IMR-90 (cell line): ENCODE measurements at regions of chr1 and their contacts with region 1.

Region 1: GRCh38 chr1:25895365-25895993 is 10.7 kb downstream of the STMN1 start:
- DNase-seq: peak; percentile 92
- ATAC-seq: peak; percentile 87
- H3K4me3 ChIP-seq: no peak overlapping the region
- H3K27ac ChIP-seq: peak overlapping the region; percentile 11
- H3K4me1 ChIP-seq: peaks cover 33% of the 10 kb centered on the region
- H3K27me3 ChIP-seq: no peaks in the 10 kb centered on the region
- CTCF ChIP-seq: peak; percentile 100
- POLR2A ChIP-seq: peak; percentile 52; the same call in 1 of the 2 replicates
- RAD21 ChIP-seq: peak; percentile 99

Region 2: GRCh38 chr1:25990702-25991395 is 95.4 kb after region 1 on chr1:
- CTCF ChIA-PET with region 1: interaction called, 47 read pairs
- POLR2A ChIA-PET with region 1: interaction called, 14 read pairs
- dilution Hi-C with region 1: no loop called
- in situ Hi-C with region 1: loop called (anchors 5 kb)
- intact Hi-C with region 1: no loop called
- DNase-seq: no peak
- ATAC-seq: no peak
- H3K4me3 ChIP-seq: no peak overlapping the region
- H3K27ac ChIP-seq: no peak overlapping the region
- H3K4me1 ChIP-seq: peaks cover 10% of the 10 kb centered on the region
- H3K27me3 ChIP-seq: no peaks in the 10 kb centered on the region
- CTCF ChIP-seq: no peak
- POLR2A ChIP-seq: no peak
- RAD21 ChIP-seq: no peak

Region 3: DNA sequence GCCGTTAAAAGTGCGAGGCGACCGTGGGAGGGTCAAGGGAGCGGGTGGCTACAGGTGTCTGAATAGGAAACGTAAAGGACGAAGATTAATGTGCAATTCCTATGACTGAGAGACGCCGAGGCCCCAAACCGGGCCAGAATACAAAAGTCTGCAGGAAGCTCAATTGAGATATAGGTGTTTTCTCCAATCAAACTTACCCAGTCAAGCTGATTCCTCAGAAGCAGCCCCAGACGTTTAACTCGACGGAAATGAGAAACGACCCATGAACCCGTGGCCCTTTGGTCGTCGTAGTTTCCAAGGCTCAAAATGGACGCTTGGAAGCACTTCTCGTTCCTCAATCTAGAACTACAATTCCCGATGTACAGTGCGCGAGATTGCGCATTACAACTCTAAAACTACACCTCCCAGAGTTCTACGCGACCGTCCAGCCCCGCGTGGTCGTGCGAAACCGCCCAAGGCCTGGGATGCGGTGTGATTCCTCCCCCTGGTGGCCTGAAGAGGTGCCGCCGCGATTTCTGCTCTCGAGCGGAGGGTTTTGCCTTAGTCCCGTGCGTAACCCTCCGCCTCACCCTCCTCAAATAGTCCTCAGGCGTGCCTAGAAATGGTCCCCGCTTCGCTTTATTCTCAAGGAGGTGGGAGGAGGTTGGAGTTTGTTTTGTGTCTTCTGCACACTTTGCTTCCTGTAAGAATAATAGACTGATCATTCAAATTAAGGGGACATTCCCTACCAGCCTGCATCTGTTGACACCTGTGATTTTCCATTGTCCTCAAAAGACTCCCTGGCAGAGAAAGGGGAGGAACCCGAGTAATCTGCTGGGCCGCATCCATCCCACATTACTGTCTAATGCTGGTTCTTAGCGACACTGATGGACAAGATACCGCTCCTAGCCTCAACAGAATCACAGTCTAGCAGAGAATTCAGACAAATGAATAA is 102.6 kb after region 1 on chr1 and contains the start of gene PAFAH2:
- CTCF ChIA-PET with region 1: interaction called, 47 read pairs
- POLR2A ChIA-PET with region 1: interaction called, 13 read pairs
- dilution Hi-C with region 1: no loop called
- in situ Hi-C with region 1: loop called (anchors 5 kb)
- intact Hi-C with region 1: loop called (anchors 1 kb)
- DNase-seq: peak; percentile 100
- ATAC-seq: peak; percentile 99
- H3K4me3 ChIP-seq: peak within 1 kb of the TSS; percentile 48
- H3K27ac ChIP-seq: peak within 1 kb of the TSS; percentile 55
- H3K4me1 ChIP-seq: peaks cover 4% of the 10 kb centered on the region
- H3K27me3 ChIP-seq: no peaks in the 10 kb centered on the region
- CTCF ChIP-seq: peak; percentile 99
- POLR2A ChIP-seq: no peak; the same call in none of the 2 replicates
- RAD21 ChIP-seq: peak; percentile 99
- total RNA-seq, gene PAFAH2: 11.9 and 12.2 TPM in 2 replicates